Psoas muscle (tissue), 8 donors: ENCODE measurements at regions of chr19 and their contacts with region 1.

Region 1: GRCh38 chr19:46860125-46860845 is 512 bp upstream of the ARHGAP35 start:
- DNase-seq: peak; percentile 99
- ATAC-seq: peak; percentile 89 to 92 (median 90)
- H3K4me3 ChIP-seq: peak overlapping the region; percentile 96
- H3K27ac ChIP-seq: peak overlapping the region; percentile 99
- H3K4me1 ChIP-seq: peaks cover 53% of the 10 kb centered on the region
- H3K27me3 ChIP-seq: no peaks in the 10 kb centered on the region
- CTCF ChIP-seq: no peak

Region 2: GRCh38 chr19:46904114-46905060 is 44.1 kb after region 1 on chr19:
- intact Hi-C with region 1: loop called (anchors 5 kb)
- DNase-seq: peak; percentile 32 to 69
- ATAC-seq: peak; percentile 28 to 72 (median 63)
- H3K4me3 ChIP-seq: no peak overlapping the region
- H3K27ac ChIP-seq: peak overlapping the region; percentile 60
- H3K4me1 ChIP-seq: peaks cover 54% of the 10 kb centered on the region
- H3K27me3 ChIP-seq: no peaks in the 10 kb centered on the region
- CTCF ChIP-seq: no peak

Region 3: GRCh38 chr19:46924874-46925547 is 64.7 kb after region 1 on chr19:
- intact Hi-C with region 1: loop called in 1 of 2 experiments (anchors 5 kb)
- DNase-seq: no peak
- ATAC-seq: peak in 3 of 4 donors; percentile 53 to 74 (median 73)
- H3K4me3 ChIP-seq: no peak overlapping the region
- H3K27ac ChIP-seq: peak overlapping the region; percentile 75
- H3K4me1 ChIP-seq: peaks cover 69% of the 10 kb centered on the region
- H3K27me3 ChIP-seq: no peaks in the 10 kb centered on the region
- CTCF ChIP-seq: no peak

Region 4: DNA sequence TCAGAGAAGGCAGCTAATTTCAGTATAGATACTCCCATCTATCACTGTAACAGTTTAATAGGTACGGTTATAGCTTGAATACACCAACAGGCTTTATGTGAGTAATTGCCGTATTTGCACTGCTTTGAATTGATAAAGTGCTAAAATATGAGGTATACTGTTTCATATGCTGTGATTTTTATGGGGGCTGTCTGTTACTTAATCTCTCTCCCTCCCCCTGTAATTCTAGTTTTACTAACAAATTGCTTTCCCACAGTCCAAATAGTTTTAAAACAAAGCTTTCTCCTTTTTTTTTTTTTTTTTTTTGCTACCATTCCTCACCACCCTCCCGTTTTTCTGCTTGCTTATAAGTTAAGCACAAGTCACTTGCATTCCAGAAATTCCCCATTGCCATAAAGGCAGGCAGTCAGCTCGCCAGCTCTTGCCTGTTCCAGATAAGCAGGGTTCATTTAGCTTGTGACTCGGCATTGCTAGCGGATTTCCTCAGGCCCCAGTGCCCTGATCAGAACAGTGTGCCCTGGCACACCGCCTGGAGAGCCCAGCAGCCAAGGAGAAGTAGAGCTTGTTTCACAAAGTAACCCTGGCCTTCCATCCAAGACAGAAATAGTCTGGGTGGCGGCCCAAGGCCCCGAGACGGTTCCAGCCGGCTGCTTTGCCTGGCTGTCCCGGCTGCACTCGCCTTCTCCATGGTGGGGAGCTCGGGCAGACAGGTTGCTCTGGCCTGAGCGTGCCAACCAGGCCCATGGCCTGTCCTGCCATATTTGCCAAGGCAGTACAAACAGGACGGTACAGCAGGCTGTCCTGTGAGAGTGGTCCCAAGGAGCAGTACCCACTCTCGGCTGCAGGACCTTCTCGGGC is 115.9 kb after region 1 on chr19:
- intact Hi-C with region 1: loop called in 1 of 2 experiments (anchors 5 kb)
- DNase-seq: peak; percentile 98 to 99
- ATAC-seq: peak; percentile 87 to 92 (median 88)
- H3K4me3 ChIP-seq: peak overlapping the region; percentile 30
- H3K27ac ChIP-seq: peak overlapping the region; percentile 91
- H3K4me1 ChIP-seq: peaks cover 87% of the 10 kb centered on the region
- H3K27me3 ChIP-seq: no peaks in the 10 kb centered on the region
- CTCF ChIP-seq: no peak

Region 5: DNA sequence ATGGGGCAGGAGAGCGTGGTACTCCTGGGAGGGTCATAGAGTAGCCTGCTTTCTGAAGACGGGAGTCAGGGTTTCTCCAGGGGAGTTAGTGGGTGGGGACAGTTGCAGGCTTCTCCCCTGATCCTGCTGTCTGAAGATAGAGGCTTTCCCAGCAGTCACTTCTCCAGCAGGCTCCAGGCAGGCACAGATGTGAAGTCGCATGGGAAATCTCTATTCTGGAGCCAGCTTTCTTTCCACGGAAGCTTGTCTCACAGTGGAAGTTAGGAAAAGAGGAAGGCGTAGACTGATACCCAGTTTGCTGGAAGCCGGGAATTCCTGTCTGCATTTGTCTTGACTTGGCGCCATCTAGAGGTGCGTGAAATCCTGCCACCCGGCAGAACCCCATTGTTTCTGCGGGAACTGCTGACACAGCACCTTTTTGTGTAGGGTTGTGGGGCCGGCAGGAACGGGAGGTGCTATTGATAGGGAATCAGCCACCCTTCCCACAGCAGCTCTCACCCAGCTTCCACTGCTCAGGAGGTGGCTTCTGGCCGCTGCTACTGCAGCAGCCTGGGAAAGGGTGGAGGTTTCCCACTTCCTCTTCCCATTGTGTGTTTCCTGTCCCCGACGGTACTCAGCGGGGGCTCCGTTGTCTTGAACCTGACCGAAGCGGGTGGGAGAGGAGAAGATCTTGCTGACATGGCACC is 130.8 kb after region 1 on chr19:
- intact Hi-C with region 1: loop called (anchors 2 kb)
- DNase-seq: peak; percentile 80 to 89
- ATAC-seq: peak; percentile 67 to 88 (median 78)
- H3K4me3 ChIP-seq: no peak overlapping the region
- H3K27ac ChIP-seq: peak overlapping the region; percentile 63
- H3K4me1 ChIP-seq: peaks cover 27% of the 10 kb centered on the region
- H3K27me3 ChIP-seq: no peaks in the 10 kb centered on the region
- CTCF ChIP-seq: peak; percentile 77